ENCODE measurements at regions of chrX and their contacts with region 1.

Region 1: DNA sequence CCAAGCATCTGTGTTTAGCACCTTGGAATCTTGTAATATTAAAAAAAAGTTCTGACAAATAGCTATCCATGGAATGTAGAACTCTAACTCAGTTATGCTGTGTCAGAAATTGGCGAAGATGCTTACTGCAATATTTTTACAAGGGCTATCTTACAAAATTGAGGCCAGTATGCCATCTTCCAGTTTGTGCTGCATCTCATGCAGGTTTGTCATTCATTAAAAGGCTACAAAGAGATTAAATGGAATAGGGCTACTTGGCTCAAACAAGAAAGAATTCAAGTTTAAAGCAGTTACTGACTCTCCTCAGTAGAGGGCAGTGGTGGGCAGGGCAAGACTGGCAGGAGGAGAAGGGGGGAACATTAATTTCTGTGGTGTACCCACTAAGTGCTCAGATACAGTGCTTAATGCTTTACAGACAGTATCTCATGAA is 66.5 kb downstream of the SHROOM4 start:
- DNase-seq: peak; percentile 32
- H3K4me3 ChIP-seq: no peak overlapping the region
- H3K27ac ChIP-seq: no peak overlapping the region
- H3K4me1 ChIP-seq: no peaks in the 10 kb centered on the region
- H3K27me3 ChIP-seq: no peaks in the 10 kb centered on the region
- CTCF ChIP-seq: peak; percentile 55 to 56
- POLR2A ChIP-seq: no peak

Region 2: GRCh38 chrX:50638123-50638522 is 109.4 kb before region 1 on chrX:
- CTCF ChIA-PET with region 1: no interaction called
- POLR2A ChIA-PET with region 1: no interaction called
- dilution Hi-C with region 1: no loop called
- intact Hi-C with region 1: no loop called
- DNase-seq: peak; percentile 50
- H3K4me3 ChIP-seq: peak overlapping the region in 1 of 3 experiments; percentile 17
- H3K27ac ChIP-seq: no peak overlapping the region
- H3K4me1 ChIP-seq: peaks cover 48% of the 10 kb centered on the region
- H3K27me3 ChIP-seq: no peaks in the 10 kb centered on the region
- CTCF ChIP-seq: no peak
- POLR2A ChIP-seq: peak; percentile 48

Region 3: GRCh38 chrX:50813827-50814742 is 66.6 kb after region 1 on chrX and contains the start of gene SHROOM4:
- CTCF ChIA-PET with region 1: interaction called, 7 read pairs
- POLR2A ChIA-PET with region 1: no interaction called
- dilution Hi-C with region 1: no loop called
- intact Hi-C with region 1: loop called (anchors 1 kb)
- DNase-seq: peak; percentile 90
- H3K4me3 ChIP-seq: peak within 1 kb of the TSS; percentile 51 to 63 (median 52)
- H3K27ac ChIP-seq: peak within 1 kb of the TSS; percentile 96
- H3K4me1 ChIP-seq: peaks cover 22% of the 10 kb centered on the region
- H3K27me3 ChIP-seq: no peaks in the 10 kb centered on the region
- CTCF ChIP-seq: no peak
- POLR2A ChIP-seq: no peak
- total RNA-seq, gene SHROOM4: 57.5 and 58.7 TPM in 2 replicates

Region 4: DNA sequence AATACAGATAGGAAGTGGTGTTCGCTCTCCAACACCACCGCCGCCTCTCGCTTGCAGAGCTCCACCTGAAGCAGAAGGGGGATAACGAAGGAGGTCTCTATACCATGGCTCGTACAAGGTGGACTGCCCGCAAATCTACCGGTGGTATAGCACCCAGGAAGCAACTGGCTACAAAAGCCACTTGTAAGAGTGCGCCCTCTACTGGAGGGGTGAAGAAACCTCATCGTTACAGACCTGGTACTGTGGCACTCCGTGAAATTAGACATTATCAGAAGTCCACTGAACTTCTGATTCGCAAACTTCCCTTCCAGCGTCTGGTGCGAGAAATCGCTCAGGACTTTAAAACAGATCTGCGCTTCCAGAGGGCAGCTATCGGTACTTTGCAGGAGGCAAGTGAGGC is 157.8 kb after region 1 on chrX:
- CTCF ChIA-PET with region 1: interaction called, 147 read pairs
- POLR2A ChIA-PET with region 1: no interaction called
- dilution Hi-C with region 1: no loop called
- intact Hi-C with region 1: loop called (anchors 1 kb)
- DNase-seq: no peak
- H3K4me3 ChIP-seq: no peak overlapping the region
- H3K27ac ChIP-seq: no peak overlapping the region
- H3K4me1 ChIP-seq: no peaks in the 10 kb centered on the region
- H3K27me3 ChIP-seq: peaks cover 0 to 2% of the 10 kb centered on the region in 2 experiments
- CTCF ChIP-seq: peak in 1 of 2 donors; percentile 5
- POLR2A ChIP-seq: no peak

Region 5: DNA sequence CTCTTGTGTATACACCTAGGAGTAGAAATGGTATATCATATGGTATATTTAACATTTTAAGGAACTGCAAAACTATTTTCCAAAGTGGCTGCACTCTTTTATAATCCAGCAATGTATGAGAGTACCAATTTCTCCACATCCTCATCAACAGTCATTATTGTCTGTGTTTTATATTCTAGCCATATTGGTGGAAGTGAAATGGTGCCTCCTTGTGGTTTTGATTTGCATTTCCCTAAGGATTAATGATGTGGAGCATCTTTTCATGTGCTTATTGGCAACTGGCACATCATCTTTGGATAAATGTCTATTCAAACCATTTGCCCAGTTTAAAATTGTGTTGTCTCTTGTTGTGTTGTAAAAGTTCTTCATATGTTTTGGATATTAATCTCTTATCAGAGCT is 172.6 kb after region 1 on chrX:
- CTCF ChIA-PET with region 1: interaction called, 9 read pairs
- POLR2A ChIA-PET with region 1: no interaction called
- dilution Hi-C with region 1: no loop called
- intact Hi-C with region 1: loop called (anchors 1 kb)
- DNase-seq: peak; percentile 46
- H3K4me3 ChIP-seq: no peak overlapping the region
- H3K27ac ChIP-seq: no peak overlapping the region
- H3K4me1 ChIP-seq: no peaks in the 10 kb centered on the region
- H3K27me3 ChIP-seq: no peaks in the 10 kb centered on the region
- CTCF ChIP-seq: peak in 1 of 2 donors; percentile 31
- POLR2A ChIP-seq: no peak

Region 6: DNA sequence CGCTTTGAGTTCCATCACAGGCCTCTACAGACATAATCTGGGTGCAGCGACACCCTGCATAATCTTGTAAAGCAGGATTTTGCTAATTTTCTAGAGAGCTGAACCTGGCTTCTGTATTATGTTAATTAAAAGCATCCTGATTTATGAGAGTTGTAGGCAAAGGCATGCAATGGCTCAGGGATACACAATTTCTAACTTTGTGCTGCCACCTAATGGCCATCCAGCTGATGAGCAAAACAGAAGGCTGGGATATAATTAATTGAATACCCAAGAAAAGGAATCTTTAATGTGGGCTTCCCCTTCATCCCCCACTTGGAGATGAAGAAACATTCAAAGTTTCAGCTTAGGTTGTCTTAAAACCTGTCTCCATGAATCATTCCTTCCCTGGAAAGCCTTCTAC is 241.2 kb after region 1 on chrX:
- CTCF ChIA-PET with region 1: interaction called, 6 read pairs
- POLR2A ChIA-PET with region 1: no interaction called
- dilution Hi-C with region 1: no loop called
- intact Hi-C with region 1: loop called (anchors 2 kb)
- DNase-seq: peak; percentile 21
- H3K4me3 ChIP-seq: no peak overlapping the region
- H3K27ac ChIP-seq: no peak overlapping the region
- H3K4me1 ChIP-seq: no peaks in the 10 kb centered on the region
- H3K27me3 ChIP-seq: peaks cover 2 to 9% of the 10 kb centered on the region in 2 experiments
- CTCF ChIP-seq: peak; percentile 31 to 47
- POLR2A ChIP-seq: no peak

Region 7: GRCh38 chrX:52261463-52262194 is 1514.1 kb after region 1 on chrX:
- CTCF ChIA-PET with region 1: interaction called, 4 read pairs
- POLR2A ChIA-PET with region 1: no interaction called
- dilution Hi-C with region 1: no loop called
- intact Hi-C with region 1: loop called (anchors 5 kb)
- DNase-seq: peak; percentile 76
- H3K4me3 ChIP-seq: peak overlapping the region; percentile 26 to 67 (median 51)
- H3K27ac ChIP-seq: peak overlapping the region; percentile 61
- H3K4me1 ChIP-seq: no peaks in the 10 kb centered on the region
- H3K27me3 ChIP-seq: no peaks in the 10 kb centered on the region
- CTCF ChIP-seq: peak; percentile 65 to 68
- POLR2A ChIP-seq: peak; percentile 73